ENCODE measurements at regions of chr7 and their contacts with region 1.

Region 1: DNA sequence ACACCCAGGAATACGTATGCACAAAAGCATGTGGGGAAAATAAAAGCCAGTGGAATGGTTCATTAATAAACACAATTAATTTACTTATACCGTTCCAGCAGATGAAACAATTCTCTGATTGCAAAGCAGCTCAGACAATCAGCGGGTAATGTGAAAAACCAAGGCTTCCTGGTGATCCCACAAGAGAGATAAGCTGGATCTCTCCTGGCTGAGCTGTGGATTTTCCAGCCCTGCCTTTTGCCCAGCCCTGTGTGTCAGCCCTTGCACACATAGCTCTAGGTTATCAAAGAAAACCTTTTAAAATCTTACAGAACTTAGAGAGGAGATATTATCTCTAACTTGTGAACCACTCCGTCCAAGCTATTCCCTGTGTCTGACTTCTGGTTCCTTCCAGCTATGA is 1010.7 kb upstream of the AUTS2 start:
- DNase-seq: no peak
- H3K4me3 ChIP-seq: no peak overlapping the region
- H3K27ac ChIP-seq: no peak overlapping the region
- H3K4me1 ChIP-seq: no peaks in the 10 kb centered on the region
- CTCF ChIP-seq: no peak

Region 2: GRCh38 chr7:68573271-68574005 is 14.2 kb before region 1 on chr7:
- CTCF ChIA-PET with region 1: no interaction called
- POLR2A ChIA-PET with region 1: interaction called, 26 read pairs
- intact Hi-C with region 1: no loop called
- DNase-seq: peak; percentile 98
- H3K4me3 ChIP-seq: peak overlapping the region; percentile 48
- H3K27ac ChIP-seq: peak overlapping the region; percentile 96
- H3K4me1 ChIP-seq: peaks cover 68% of the 10 kb centered on the region
- CTCF ChIP-seq: no peak

Region 3: GRCh38 chr7:68613405-68613804 is 25.8 kb after region 1 on chr7:
- CTCF ChIA-PET with region 1: no interaction called
- POLR2A ChIA-PET with region 1: interaction called, 10 read pairs
- intact Hi-C with region 1: no loop called
- DNase-seq: peak; percentile 16
- H3K4me3 ChIP-seq: no peak overlapping the region
- H3K27ac ChIP-seq: no peak overlapping the region
- H3K4me1 ChIP-seq: no peaks in the 10 kb centered on the region
- CTCF ChIP-seq: no peak

Region 4: DNA sequence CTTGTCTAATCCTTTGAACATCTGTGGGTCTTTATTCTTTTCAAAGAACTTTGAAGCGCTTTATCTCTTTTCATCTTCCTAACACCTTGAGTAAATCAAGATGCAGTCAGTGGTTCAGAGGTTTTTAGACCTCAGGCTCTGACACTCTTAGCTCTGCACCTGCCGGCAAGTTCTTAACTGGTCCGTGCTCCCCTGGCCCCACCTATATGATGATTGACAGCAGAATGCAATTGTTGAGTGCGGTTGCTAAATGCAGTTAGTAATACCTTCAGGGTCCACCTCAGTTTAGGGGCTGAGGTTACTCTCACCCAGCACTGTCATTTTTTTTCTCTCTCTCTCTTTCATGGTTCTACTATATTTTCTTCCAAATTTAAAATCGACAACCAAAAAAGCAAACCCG is 156.4 kb after region 1 on chr7:
- CTCF ChIA-PET with region 1: no interaction called
- POLR2A ChIA-PET with region 1: no interaction called
- intact Hi-C with region 1: no loop called
- DNase-seq: no peak
- H3K4me3 ChIP-seq: no peak overlapping the region
- H3K27ac ChIP-seq: no peak overlapping the region
- H3K4me1 ChIP-seq: no peaks in the 10 kb centered on the region
- CTCF ChIP-seq: no peak

Region 5: DNA sequence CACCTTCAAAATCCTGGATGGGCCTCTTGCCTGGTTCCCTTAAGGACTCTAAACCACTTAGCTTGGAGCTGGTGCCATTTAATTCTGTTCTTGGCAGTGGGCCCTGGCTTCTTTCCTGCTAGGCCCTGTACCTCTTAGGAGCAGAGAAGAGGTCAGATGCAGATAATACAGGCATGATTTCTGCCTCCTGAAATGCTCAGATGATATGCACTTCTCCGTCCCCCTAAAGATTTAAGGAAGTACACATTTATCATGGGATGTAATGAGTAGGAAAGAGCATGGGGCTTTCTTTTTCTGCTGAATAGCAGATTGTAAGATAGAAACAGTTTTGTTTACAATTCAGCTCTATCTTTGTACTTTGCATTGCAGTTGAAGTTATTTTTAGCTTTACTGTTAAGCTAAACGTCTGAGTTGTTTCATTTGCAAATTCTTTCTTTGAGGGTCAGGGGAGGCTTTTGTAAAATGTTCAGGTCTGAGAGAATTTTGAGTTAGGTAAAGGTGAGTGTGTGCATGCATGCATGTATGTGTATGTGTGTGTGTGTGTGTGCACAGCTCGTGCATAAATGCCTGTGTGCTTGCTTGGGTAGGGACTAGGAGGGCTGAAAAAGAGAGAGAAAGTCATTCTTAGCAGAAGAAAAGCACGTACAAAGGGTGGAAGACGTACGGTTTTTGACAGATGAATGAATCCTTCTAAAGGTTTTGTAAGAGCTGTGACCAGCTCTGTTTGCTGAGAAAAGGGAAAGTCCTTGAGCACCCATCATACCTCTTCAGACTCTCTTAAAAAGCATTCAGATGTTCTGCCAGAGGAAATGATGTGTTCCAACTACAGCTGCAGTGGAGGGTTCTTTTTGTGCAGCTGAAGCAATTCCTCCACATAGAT is 1374.8 kb after region 1 on chr7:
- CTCF ChIA-PET with region 1: no interaction called
- POLR2A ChIA-PET with region 1: no interaction called
- intact Hi-C with region 1: no loop called
- DNase-seq: peak; percentile 81
- H3K4me3 ChIP-seq: peak overlapping the region; percentile 57
- H3K27ac ChIP-seq: peak overlapping the region; percentile 93
- H3K4me1 ChIP-seq: peaks cover 79% of the 10 kb centered on the region
- CTCF ChIP-seq: no peak

Measured in OCI-LY7 (cell line).